Tibial artery (tissue), 4 donors: ENCODE measurements at regions of chr10 and their contacts with region 1.

Region 1: GRCh38 chr10:33330543-33331378 is 3.7 kb downstream of the NRP1 start:
- DNase-seq: peak; percentile 90 to 91
- H3K4me3 ChIP-seq: peak overlapping the region; percentile 67 to 93
- H3K27ac ChIP-seq: peak overlapping the region; percentile 90 to 93
- H3K4me1 ChIP-seq: peaks cover 0 to 60% (median 23%) of the 10 kb centered on the region in 4 donors
- H3K27me3 ChIP-seq: no peaks in the 10 kb centered on the region
- CTCF ChIP-seq: peak; percentile 83 to 91

Region 2: GRCh38 chr10:32459051-32459698 is 871.6 kb before region 1 on chr10:
- intact Hi-C with region 1: no loop called
- DNase-seq: no peak
- H3K4me3 ChIP-seq: no peak overlapping the region
- H3K27ac ChIP-seq: no peak overlapping the region
- H3K4me1 ChIP-seq: no peaks in the 10 kb centered on the region
- H3K27me3 ChIP-seq: no peaks in the 10 kb centered on the region
- CTCF ChIP-seq: no peak

Region 3: DNA sequence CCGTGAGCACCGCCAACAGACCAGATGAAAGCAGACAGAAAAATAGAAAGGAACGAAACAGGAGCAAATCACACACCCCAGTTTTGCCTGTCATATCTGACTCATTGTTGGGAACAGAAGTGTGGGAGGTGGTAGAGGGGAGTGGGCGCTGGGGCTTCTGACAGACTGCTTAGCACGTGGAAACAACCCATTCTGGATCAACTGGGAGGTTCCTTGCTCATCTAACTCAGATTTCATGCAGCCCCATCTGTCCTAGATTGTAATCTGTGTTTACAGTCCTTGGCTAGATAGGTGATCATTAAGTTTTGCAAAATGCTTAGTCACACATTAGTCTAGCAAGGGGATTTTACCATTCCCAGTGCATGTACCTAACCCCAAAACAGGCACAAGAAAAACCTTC is 150.4 kb before region 1 on chr10:
- intact Hi-C with region 1: no loop called
- DNase-seq: no peak
- H3K4me3 ChIP-seq: no peak overlapping the region
- H3K27ac ChIP-seq: no peak overlapping the region
- H3K4me1 ChIP-seq: peaks cover 0 to 16% (median 8%) of the 10 kb centered on the region in 4 donors
- H3K27me3 ChIP-seq: no peaks in the 10 kb centered on the region
- CTCF ChIP-seq: no peak

Region 4: DNA sequence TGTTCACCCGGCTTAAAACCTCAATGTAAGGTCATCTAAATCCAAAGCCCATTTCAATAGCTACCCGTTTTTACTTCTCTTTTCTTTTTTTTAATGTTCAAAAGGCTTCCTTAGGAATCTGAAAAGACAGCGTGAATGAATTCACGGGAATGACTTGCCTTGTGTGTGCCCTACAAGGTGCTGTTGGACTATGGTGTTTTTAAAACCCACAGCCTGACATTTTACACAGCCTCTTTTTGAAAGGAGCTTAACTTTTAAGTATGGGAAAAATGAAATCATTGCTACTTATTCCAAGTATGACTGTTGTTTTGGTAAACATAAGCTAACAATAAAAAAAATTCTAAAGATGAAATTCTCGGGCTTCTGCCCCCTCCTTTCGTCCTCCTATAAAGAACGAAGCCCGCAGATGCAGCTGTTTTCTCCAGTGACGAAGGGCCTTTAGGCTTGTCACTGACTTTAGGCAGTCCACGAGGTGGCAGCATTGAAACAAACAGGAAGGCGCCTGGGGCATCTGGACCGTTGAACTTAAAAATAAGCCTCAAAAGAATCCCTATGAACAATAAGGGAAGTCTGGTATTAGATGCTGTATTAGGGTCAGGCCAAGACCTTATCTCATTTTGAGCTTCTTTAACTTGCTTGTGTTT is 137.6 kb before region 1 on chr10:
- intact Hi-C with region 1: loop called (anchors 10 kb)
- DNase-seq: peak; percentile 88 to 89
- H3K4me3 ChIP-seq: no peak overlapping the region
- H3K27ac ChIP-seq: peak overlapping the region; percentile 54 to 60
- H3K4me1 ChIP-seq: peaks cover 0 to 41% (median 11%) of the 10 kb centered on the region in 4 donors
- H3K27me3 ChIP-seq: no peaks in the 10 kb centered on the region
- CTCF ChIP-seq: peak; percentile 79 to 80

Region 5: DNA sequence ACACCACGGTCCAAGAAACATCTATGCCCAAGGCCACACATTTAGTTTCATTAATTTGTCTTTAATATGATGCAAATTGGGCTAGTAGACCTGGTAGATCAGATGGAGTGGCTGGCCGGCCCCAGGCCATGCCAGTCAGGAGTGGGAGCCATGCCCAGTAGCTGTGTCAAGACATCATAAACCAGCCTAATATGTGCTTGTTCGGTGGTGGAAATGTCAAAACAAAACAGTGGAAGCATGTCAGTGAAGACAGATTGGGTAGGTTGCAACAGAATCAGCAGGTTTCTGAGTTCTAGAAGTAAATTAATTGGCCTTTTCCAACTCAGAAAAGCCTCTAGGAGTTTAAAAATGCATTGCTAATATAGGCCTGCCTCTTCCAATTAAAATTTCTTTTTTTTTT is 121.0 kb before region 1 on chr10:
- intact Hi-C with region 1: loop called (anchors 5 kb)
- DNase-seq: no peak
- H3K4me3 ChIP-seq: no peak overlapping the region
- H3K27ac ChIP-seq: peak overlapping the region in 1 of 2 donors; percentile 79
- H3K4me1 ChIP-seq: peaks cover 0 to 31% (median 18%) of the 10 kb centered on the region in 4 donors
- H3K27me3 ChIP-seq: no peaks in the 10 kb centered on the region
- CTCF ChIP-seq: no peak

Region 6: DNA sequence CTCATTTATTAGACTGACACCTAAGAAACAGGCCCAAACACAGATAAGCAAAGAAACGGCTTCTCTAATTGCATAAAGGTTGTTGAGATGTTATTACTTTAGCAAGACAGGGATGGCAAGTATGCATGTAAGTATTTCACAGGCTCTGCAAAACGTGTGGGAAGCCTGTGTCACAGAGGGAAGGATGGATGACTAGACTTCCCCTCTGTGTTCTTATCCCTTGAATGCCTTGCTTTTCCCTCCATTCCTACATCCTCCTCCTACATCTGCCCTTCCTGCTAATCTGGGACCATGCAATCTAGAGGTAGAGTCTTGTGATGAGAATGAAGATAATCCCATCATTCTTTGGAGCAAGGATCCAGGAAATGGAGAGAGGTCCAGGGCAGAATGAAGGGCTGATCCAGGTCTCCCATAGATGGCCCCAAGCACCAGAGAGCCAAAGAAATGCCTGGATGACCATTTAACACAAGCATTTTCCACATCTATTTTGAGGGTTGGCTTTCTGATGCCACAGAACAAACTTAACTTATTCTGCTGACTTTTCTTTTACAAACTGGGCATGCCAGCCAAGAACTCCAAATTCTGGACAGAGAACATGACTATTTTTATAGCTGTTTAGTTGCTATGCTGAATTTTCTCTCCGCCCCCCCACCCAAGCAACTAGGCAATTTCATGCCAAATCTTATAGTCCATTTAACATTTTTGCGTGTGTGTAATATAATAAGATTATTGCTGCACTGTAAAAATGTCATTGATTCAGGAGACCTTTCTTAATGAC is 44.4 kb before region 1 on chr10:
- intact Hi-C with region 1: loop called (anchors 5 kb)
- DNase-seq: peak; percentile 43 to 71
- H3K4me3 ChIP-seq: no peak overlapping the region
- H3K27ac ChIP-seq: peak overlapping the region; percentile 60 to 69
- H3K4me1 ChIP-seq: peaks cover 0 to 70% (median 45%) of the 10 kb centered on the region in 4 donors
- H3K27me3 ChIP-seq: no peaks in the 10 kb centered on the region
- CTCF ChIP-seq: no peak

Region 7: DNA sequence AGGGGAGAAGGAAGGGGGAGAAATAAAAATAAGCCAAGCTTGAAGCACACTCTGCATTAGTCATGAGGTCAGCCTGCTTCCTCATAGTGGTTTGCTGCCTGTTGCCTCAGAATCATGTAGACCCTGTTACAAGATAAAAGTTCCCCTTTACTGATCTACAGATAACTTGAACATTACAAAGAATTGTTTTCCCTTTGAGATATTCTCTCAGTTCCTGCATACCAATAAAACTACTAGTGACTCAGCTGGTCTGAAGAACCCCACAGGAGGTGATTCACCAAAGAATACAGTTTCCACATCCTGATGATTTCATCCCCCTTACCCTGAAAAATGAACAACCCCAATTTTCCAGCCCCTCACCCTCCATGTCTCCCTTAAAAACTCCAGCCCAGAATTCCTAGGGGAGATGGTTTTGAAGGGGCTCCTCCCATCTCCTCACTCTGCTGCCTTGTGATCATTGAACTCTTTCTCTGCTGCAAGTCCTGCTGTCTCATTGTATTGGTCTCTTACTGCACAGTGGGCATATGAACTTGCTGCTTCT is 35.2 kb after region 1 on chr10:
- intact Hi-C with region 1: no loop called
- DNase-seq: no peak
- H3K4me3 ChIP-seq: no peak overlapping the region
- H3K27ac ChIP-seq: no peak overlapping the region
- H3K4me1 ChIP-seq: no peaks in the 10 kb centered on the region
- H3K27me3 ChIP-seq: no peaks in the 10 kb centered on the region
- CTCF ChIP-seq: no peak

Region 8: GRCh38 chr10:33524966-33525365 is 194.2 kb after region 1 on chr10:
- intact Hi-C with region 1: no loop called
- DNase-seq: no peak
- H3K4me3 ChIP-seq: no peak overlapping the region
- H3K27ac ChIP-seq: no peak overlapping the region
- H3K4me1 ChIP-seq: peaks cover 3 to 34% (median 12%) of the 10 kb centered on the region in 4 donors
- H3K27me3 ChIP-seq: no peaks in the 10 kb centered on the region
- CTCF ChIP-seq: no peak

Region 9: DNA sequence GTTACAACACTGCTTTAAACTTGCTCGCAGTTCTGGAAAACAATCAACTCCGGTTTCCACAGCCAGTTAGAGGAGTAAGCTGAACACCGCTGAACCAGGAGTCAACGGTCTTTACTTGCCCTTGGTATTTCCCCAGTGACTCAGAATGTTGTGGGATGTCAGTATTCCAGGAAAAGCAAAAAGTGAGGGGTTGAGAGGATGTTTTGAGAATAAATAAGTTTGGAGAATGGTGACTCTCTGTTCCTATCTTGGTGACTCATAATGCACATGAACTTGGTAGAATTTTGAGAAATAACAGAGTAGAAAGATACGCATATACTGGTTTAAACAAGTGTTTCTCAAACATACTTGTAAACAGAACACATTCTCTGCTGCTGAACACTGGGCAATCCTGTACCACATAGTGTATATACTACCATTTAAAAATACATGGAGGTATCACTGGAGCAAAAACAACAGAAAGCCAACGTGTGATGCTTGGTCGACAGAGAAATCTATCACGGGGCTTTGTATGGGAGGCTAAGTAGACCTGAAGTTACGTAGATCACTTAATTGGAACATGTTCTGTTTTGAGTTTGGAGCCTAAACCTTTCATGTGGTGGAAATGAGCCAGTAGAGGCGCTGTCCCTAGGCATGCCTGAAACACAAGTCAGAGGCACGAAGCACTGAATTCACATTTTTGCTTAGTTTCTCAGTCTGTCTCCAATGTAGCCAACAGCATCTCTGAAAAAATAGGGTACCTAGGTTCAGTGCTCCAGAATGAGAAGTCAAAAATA is 950.0 kb after region 1 on chr10:
- intact Hi-C with region 1: loop called (anchors 10 kb)
- DNase-seq: peak; percentile 73 to 75
- H3K4me3 ChIP-seq: peak overlapping the region; percentile 1 to 11
- H3K27ac ChIP-seq: peak overlapping the region; percentile 68 to 79
- H3K4me1 ChIP-seq: peaks cover 0 to 36% (median 20%) of the 10 kb centered on the region in 4 donors
- H3K27me3 ChIP-seq: no peaks in the 10 kb centered on the region
- CTCF ChIP-seq: peak; percentile 42 to 47

Region 10: GRCh38 chr10:34637418-34637911 is 1306.7 kb after region 1 on chr10:
- intact Hi-C with region 1: loop called (anchors 2 kb)
- DNase-seq: peak; percentile 73 to 77
- H3K4me3 ChIP-seq: no peak overlapping the region
- H3K27ac ChIP-seq: no peak overlapping the region
- H3K4me1 ChIP-seq: peaks cover 10 to 20% (median 13%) of the 10 kb centered on the region in 4 donors
- H3K27me3 ChIP-seq: no peaks in the 10 kb centered on the region
- CTCF ChIP-seq: peak; percentile 88 to 95